K562 (cell line): ENCODE measurements at regions of chr2 and their contacts with region 1.

Region 1: GRCh38 chr2:112685271-112685884 is 35.4 kb upstream of the NT5DC4 start:
- DNase-seq: peak in 2 of 4 experiments; percentile 37 to 53
- ATAC-seq: peak; percentile 56
- H3K4me3 ChIP-seq: no peak overlapping the region
- H3K27ac ChIP-seq: peak overlapping the region; percentile 86
- H3K4me1 ChIP-seq: peaks cover 44 to 66% of the 10 kb centered on the region in 2 experiments
- H3K27me3 ChIP-seq: no peaks in the 10 kb centered on the region
- CTCF ChIP-seq: peak in 1 of 3 experiments; percentile 43; a peak in 3 of 6 replicates
- EP300 ChIP-seq: no peak; the same call in 1 of the 2 replicates
- POLR2A ChIP-seq: no peak
- RAD21 ChIP-seq: no peak

Region 2: GRCh38 chr2:112666764-112667122 is 18.6 kb before region 1 on chr2:
- CTCF ChIA-PET with region 1: no interaction called
- POLR2A ChIA-PET with region 1: interaction called, 14 read pairs
- in situ Hi-C with region 1: no loop called
- intact Hi-C with region 1: no loop called
- DNase-seq: peak; percentile 68 to 81 (median 76)
- ATAC-seq: peak; percentile 67
- H3K4me3 ChIP-seq: no peak overlapping the region
- H3K27ac ChIP-seq: peak overlapping the region; percentile 70
- H3K4me1 ChIP-seq: peaks cover 6 to 55% of the 10 kb centered on the region in 2 experiments; a peak in 4 of 5 replicates
- H3K27me3 ChIP-seq: no peaks in the 10 kb centered on the region
- CTCF ChIP-seq: no peak
- EP300 ChIP-seq: peak; percentile 85
- POLR2A ChIP-seq: no peak
- RAD21 ChIP-seq: no peak